ENCODE measurements at regions of chr6 and their contacts with region 1.

Region 1: DNA sequence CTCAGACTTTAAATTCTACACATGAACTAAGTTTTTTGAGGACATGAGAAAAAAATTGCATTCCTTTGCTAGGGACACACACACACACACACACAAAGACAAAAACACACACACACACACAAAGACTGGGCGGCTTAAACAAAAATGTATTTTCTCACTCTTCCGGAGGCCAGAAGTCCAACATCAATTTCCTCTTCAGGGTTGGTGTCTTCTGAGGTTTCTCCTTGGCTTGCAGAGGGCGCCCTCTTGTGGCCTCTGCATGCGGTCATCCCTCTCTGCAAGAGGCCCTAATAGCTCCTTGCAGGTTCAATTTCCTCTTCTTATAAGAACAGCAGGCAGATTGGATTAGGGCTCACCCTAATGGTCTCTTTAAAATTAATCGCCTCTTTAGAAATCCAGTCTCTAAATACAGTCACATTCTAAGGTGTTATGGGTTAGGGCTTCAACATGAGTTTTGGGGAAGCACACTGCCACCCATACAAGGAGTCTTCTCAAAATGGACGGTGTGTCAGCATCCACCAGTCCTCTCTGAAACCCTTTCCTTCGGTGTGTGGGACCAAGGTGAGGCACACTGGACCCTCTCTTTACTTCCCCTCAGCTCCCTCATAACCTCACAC is 61.4 kb downstream of the GPR6 start:
- H3K4me3 ChIP-seq: peak overlapping the region; percentile 1
- H3K27ac ChIP-seq: no peak overlapping the region
- H3K4me1 ChIP-seq: no peaks in the 10 kb centered on the region
- CTCF ChIP-seq: peak; percentile 88

Region 2: GRCh38 chr6:109595998-109596397 is 443.5 kb before region 1 on chr6:
- CTCF ChIA-PET with region 1: interaction called, 18 read pairs
- POLR2A ChIA-PET with region 1: no interaction called
- H3K4me3 ChIP-seq: no peak overlapping the region
- H3K27ac ChIP-seq: no peak overlapping the region
- H3K4me1 ChIP-seq: no peaks in the 10 kb centered on the region
- CTCF ChIP-seq: 0 out of 2 replicates have a peak, but pooled peaks have one; percentile 19

Region 3: GRCh38 chr6:109705258-109705657 is 334.2 kb before region 1 on chr6:
- CTCF ChIA-PET with region 1: interaction called, 204 read pairs
- POLR2A ChIA-PET with region 1: no interaction called
- H3K4me3 ChIP-seq: no peak overlapping the region
- H3K27ac ChIP-seq: no peak overlapping the region
- H3K4me1 ChIP-seq: no peaks in the 10 kb centered on the region
- CTCF ChIP-seq: peak; percentile 95

Region 4: GRCh38 chr6:109740787-109741186 is 298.7 kb before region 1 on chr6:
- CTCF ChIA-PET with region 1: interaction called, 13 read pairs
- POLR2A ChIA-PET with region 1: no interaction called
- H3K4me3 ChIP-seq: no peak overlapping the region
- H3K27ac ChIP-seq: no peak overlapping the region
- H3K4me1 ChIP-seq: no peaks in the 10 kb centered on the region
- CTCF ChIP-seq: no peak

Region 5: GRCh38 chr6:110020888-110021287 is 18.6 kb before region 1 on chr6:
- CTCF ChIA-PET with region 1: interaction called, 13 read pairs
- POLR2A ChIA-PET with region 1: no interaction called
- H3K4me3 ChIP-seq: no peak overlapping the region
- H3K27ac ChIP-seq: no peak overlapping the region
- H3K4me1 ChIP-seq: no peaks in the 10 kb centered on the region
- CTCF ChIP-seq: no peak

Region 6: GRCh38 chr6:110053395-110054240 is 14.1 kb after region 1 on chr6:
- CTCF ChIA-PET with region 1: interaction called, 43 read pairs
- POLR2A ChIA-PET with region 1: no interaction called
- H3K4me3 ChIP-seq: no peak overlapping the region
- H3K27ac ChIP-seq: no peak overlapping the region
- H3K4me1 ChIP-seq: no peaks in the 10 kb centered on the region
- CTCF ChIP-seq: peak; percentile 43

Measured in HEK293 (cell line).